ENCODE measurements at regions of chr14 and their contacts with region 1.

Region 1: GRCh38 chr14:24093901-24094761 is at the start of gene PCK2:
- DNase-seq: peak; percentile 93 to 99
- H3K4me3 ChIP-seq: peak within 1 kb of the TSS; percentile 73
- CTCF ChIP-seq: peak in 1 of 3 donors; percentile 20
- POLR2A ChIP-seq: no peak
- total RNA-seq, gene PCK2: 15.4 to 29.0 (median 21.0) TPM

Region 2: GRCh38 chr14:22545842-22546721 is 1548.0 kb before region 1 on chr14:
- intact Hi-C with region 1: no loop called
- DNase-seq: no peak
- H3K4me3 ChIP-seq: no peak overlapping the region
- CTCF ChIP-seq: no peak
- POLR2A ChIP-seq: no peak

Region 3: DNA sequence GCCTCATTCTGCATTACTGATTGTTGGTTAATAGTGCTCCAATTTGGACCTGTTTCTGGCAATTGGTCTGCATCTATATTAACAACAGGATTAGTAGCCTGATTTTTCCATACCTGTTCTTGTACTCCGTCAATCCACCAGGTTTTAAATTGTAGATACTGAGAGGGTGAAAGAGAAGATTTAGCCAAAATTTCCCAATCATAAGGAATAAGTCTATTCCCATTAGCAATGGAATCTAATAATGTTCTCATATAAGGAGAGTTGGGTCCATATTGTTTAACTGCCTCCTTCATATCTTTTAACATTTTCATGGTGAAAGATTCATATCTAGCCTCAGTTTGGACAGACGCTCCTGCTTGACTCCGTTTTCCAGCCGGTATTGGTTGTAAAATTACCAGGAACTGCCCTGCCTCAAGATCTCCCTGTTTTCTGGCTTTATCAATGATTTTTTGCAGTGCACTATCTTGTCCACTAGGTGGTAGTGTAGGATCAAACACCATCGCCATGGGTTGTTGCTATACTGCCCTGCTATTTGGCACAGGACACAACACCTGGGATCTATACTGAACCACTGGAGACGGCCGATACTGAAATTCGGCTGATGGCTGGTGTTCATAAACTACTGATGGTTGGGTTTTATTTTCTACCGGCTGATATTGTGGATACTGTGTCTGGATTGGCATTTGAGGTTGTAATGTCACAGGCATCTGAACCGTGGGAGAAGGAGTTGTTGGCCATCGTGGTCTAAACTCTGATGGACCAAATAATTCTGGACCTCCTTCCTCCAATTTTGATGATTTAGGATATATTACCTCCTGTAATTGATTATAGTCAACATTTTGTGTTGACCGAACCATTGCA is 80.2 kb before region 1 on chr14:
- intact Hi-C with region 1: loop called (anchors 10 kb)
- DNase-seq: peak in 1 of 2 donors; percentile 48
- H3K4me3 ChIP-seq: no peak overlapping the region
- CTCF ChIP-seq: peak in 1 of 3 donors; percentile 80
- POLR2A ChIP-seq: no peak

Region 4: GRCh38 chr14:24058260-24058950 is 35.7 kb before region 1 on chr14:
- intact Hi-C with region 1: no loop called
- DNase-seq: peak in 1 of 2 donors; percentile 90
- H3K4me3 ChIP-seq: no peak overlapping the region
- CTCF ChIP-seq: peak in 1 of 3 donors; percentile 74
- POLR2A ChIP-seq: no peak